ENCODE measurements at regions of chr12 and their contacts with region 1.

Region 1: DNA sequence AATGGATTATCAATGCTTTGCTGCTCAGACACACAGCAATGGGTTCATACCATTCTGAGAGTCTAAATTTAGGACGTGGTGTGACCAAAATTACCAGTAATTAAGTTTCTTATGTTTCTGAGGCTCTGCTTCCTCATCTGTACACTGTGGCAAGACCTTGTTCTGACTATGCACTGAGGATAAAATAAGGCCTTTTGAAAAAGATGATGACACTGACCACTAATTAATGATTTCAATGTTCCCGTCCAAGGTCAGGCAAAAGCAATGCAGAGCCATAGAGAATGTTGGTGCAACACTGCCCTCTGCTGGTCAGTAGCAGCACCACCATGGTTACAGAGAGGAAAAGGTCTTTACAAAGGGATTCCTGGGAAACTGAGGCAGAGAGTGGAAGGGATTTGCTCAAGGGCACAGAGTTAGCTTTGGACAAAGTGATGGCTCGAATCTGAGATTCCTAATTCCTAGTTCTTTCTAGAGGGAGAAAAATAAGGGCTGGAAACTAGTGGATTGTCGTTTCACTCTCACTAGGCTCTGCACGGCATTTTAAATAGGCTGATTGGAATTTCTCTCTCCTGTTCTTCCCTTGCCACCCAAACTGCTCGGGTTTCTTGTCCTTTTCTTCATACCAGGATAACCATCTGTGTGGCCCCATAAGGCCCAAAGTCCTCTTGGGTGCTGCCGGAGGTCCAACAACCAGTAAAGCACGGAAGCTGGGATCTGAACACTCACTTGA is 22.3 kb upstream of the P2RX7 start:
- DNase-seq: peak; percentile 76
- H3K4me3 Mint-ChIP-seq: no peak overlapping the region
- H3K27ac Mint-ChIP-seq: no peak overlapping the region
- H3K4me1 Mint-ChIP-seq: peaks cover 8% of the 10 kb centered on the region
- H3K27me3 Mint-ChIP-seq: peaks cover 15% of the 10 kb centered on the region

Region 2: GRCh38 chr12:120761519-120761934 is 348.8 kb before region 1 on chr12:
- CTCF ChIA-PET with region 1: no interaction called
- DNase-seq: no peak
- H3K4me3 Mint-ChIP-seq: no peak overlapping the region
- H3K27ac Mint-ChIP-seq: peak overlapping the region; percentile 90
- H3K4me1 Mint-ChIP-seq: peaks cover 23% of the 10 kb centered on the region
- H3K27me3 Mint-ChIP-seq: no peaks in the 10 kb centered on the region

Region 3: GRCh38 chr12:121095544-121096198 is 14.7 kb before region 1 on chr12:
- CTCF ChIA-PET with region 1: interaction called, 15 read pairs
- DNase-seq: peak; percentile 84
- H3K4me3 Mint-ChIP-seq: peak overlapping the region; percentile 74
- H3K27ac Mint-ChIP-seq: peak overlapping the region; percentile 54
- H3K4me1 Mint-ChIP-seq: peaks cover 52% of the 10 kb centered on the region
- H3K27me3 Mint-ChIP-seq: peaks cover 33% of the 10 kb centered on the region